ENCODE measurements at regions of chr22 and their contacts with region 1.

Region 1: GRCh38 chr22:33018232-33018864 is 39.8 kb downstream of the SYN3 start:
- DNase-seq: peak; percentile 55

Region 2: GRCh38 chr22:32539631-32540421 is 478.5 kb before region 1 on chr22:
- in situ Hi-C with region 1: no loop called
- DNase-seq: no peak

Region 3: GRCh38 chr22:33063611-33064010 is 45.3 kb after region 1 on chr22:
- in situ Hi-C with region 1: no loop called
- DNase-seq: no peak

Region 4: DNA sequence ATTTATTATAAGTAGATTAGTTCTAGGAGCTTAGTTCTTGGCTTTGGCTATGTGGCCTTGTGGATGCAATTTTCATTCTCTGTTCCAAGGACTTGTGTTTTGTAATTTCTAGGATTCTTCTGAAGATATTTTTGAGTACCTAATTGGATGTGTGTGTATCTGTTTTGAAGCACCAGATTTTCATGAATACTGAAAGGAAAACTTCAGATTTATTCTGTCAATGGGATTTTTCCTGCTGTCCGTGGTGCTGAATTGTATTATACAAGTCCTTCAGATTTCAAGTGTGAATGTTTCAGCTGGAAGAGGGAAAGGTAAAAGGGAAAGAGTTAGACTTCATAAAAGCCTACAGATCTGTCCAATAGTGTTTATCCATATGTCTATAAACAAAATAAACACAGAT is 58.0 kb after region 1 on chr22:
- in situ Hi-C with region 1: no loop called
- DNase-seq: no peak

Region 5: DNA sequence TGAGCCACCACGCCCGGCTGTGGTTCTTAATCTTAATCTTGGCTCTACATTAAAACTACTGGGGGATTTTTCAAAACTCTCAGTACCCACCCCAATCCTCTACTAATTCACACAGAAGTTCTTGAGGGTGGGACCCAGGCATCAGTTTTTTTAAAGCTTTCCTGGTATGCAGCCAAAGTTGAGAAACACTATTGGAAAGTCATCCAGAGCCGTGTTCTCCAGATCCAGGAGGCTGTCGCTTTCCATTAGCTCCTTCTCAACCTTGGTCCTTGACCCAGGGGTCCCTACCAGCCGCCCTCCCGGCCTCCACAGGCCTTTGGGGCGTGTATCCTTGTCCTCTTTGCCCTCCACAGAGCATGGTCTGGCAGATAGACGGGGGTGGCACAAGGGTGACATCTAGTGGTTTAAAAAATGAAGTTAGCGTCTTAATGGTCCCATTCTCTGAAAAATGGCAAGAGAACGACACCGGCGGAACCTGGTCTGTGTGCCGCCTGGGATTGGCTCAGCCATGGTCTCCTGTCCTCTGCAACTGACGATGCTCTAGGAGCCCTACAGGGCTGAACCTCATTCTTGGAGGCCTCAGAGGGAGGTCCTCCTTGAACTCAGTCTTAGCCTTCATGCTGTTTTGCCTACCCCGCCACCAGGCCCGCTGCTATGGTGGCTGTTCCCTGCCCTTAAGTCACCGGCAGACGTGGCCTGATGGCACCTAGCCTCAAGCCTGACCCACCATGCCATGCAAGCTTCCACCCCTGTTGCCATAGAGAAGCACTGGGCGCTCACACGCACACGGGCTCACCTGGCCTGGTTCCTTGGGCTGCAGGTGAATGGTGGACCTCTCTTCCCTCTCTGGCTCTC is 191.8 kb after region 1 on chr22:
- in situ Hi-C with region 1: loop called (anchors 25 kb)
- DNase-seq: peak; percentile 71